ENCODE measurements at regions of chr12 and their contacts with region 1.

Region 1: GRCh38 chr12:26732005-26732908 is 100.7 kb downstream of the ITPR2 start:
- DNase-seq: no peak
- ATAC-seq: peak; percentile 74
- H3K4me3 Mint-ChIP-seq: peak overlapping the region; percentile 52
- H3K27ac Mint-ChIP-seq: peak overlapping the region; percentile 86
- H3K4me1 Mint-ChIP-seq: peaks cover 71% of the 10 kb centered on the region
- H3K27me3 Mint-ChIP-seq: no peaks in the 10 kb centered on the region
- CTCF ChIP-seq: no peak

Region 2: GRCh38 chr12:26696613-26697092 is 35.6 kb before region 1 on chr12:
- CTCF ChIA-PET with region 1: no interaction called
- POLR2A ChIA-PET with region 1: no interaction called
- intact Hi-C with region 1: no loop called
- DNase-seq: no peak
- ATAC-seq: no peak
- H3K4me3 Mint-ChIP-seq: no peak overlapping the region
- H3K27ac Mint-ChIP-seq: no peak overlapping the region
- H3K4me1 Mint-ChIP-seq: no peaks in the 10 kb centered on the region
- H3K27me3 Mint-ChIP-seq: no peaks in the 10 kb centered on the region
- CTCF ChIP-seq: no peak

Region 3: GRCh38 chr12:26713885-26714383 is 18.3 kb before region 1 on chr12:
- CTCF ChIA-PET with region 1: no interaction called
- POLR2A ChIA-PET with region 1: interaction called, 5 read pairs
- intact Hi-C with region 1: loop called (anchors 1 kb)
- DNase-seq: no peak
- ATAC-seq: peak; percentile 64
- H3K4me3 Mint-ChIP-seq: peak overlapping the region; percentile 25
- H3K27ac Mint-ChIP-seq: peak overlapping the region; percentile 38
- H3K4me1 Mint-ChIP-seq: peaks cover 25% of the 10 kb centered on the region
- H3K27me3 Mint-ChIP-seq: no peaks in the 10 kb centered on the region
- CTCF ChIP-seq: no peak

Region 4: GRCh38 chr12:27807063-27807703 is 1074.9 kb after region 1 on chr12:
- CTCF ChIA-PET with region 1: no interaction called
- POLR2A ChIA-PET with region 1: no interaction called
- intact Hi-C with region 1: no loop called
- DNase-seq: no peak
- ATAC-seq: no peak
- H3K4me3 Mint-ChIP-seq: no peak overlapping the region
- H3K27ac Mint-ChIP-seq: no peak overlapping the region
- H3K4me1 Mint-ChIP-seq: no peaks in the 10 kb centered on the region
- H3K27me3 Mint-ChIP-seq: no peaks in the 10 kb centered on the region
- CTCF ChIP-seq: no peak